Caco-2 (cell line): ENCODE measurements at regions of chr22 and their contacts with region 1.

Region 1: GRCh38 chr22:44063462-44064371 is 39.6 kb downstream of the PARVB start:
- DNase-seq: no peak
- H3K4me3 ChIP-seq: no peak overlapping the region
- H3K4me3 Mint-ChIP-seq: no peak overlapping the region
- H3K27ac Mint-ChIP-seq: no peak overlapping the region
- H3K4me1 ChIP-seq: peaks cover 5% of the 10 kb centered on the region; the same call in 1 of the 2 replicates
- H3K4me1 Mint-ChIP-seq: no peaks in the 10 kb centered on the region
- H3K27me3 ChIP-seq: no peaks in the 10 kb centered on the region; the same call in 1 of the 2 replicates
- H3K27me3 Mint-ChIP-seq: no peaks in the 10 kb centered on the region
- CTCF ChIP-seq: no peak

Region 2: GRCh38 chr22:44097263-44098082 is 33.8 kb after region 1 on chr22:
- CTCF ChIA-PET with region 1: no interaction called
- POLR2A ChIA-PET with region 1: no interaction called
- intact Hi-C with region 1: loop called (anchors 2 kb)
- DNase-seq: no peak
- H3K4me3 ChIP-seq: no peak overlapping the region
- H3K4me3 Mint-ChIP-seq: no peak overlapping the region
- H3K27ac Mint-ChIP-seq: no peak overlapping the region
- H3K4me1 ChIP-seq: no peaks in the 10 kb centered on the region
- H3K4me1 Mint-ChIP-seq: no peaks in the 10 kb centered on the region
- H3K27me3 ChIP-seq: no peaks in the 10 kb centered on the region
- H3K27me3 Mint-ChIP-seq: no peaks in the 10 kb centered on the region
- CTCF ChIP-seq: no peak

Region 3: GRCh38 chr22:44133901-44134571 is 70.3 kb after region 1 on chr22:
- CTCF ChIA-PET with region 1: no interaction called
- POLR2A ChIA-PET with region 1: no interaction called
- intact Hi-C with region 1: no loop called
- DNase-seq: no peak
- H3K4me3 ChIP-seq: no peak overlapping the region
- H3K4me3 Mint-ChIP-seq: no peak overlapping the region
- H3K27ac Mint-ChIP-seq: no peak overlapping the region
- H3K4me1 ChIP-seq: no peaks in the 10 kb centered on the region
- H3K4me1 Mint-ChIP-seq: no peaks in the 10 kb centered on the region
- H3K27me3 ChIP-seq: no peaks in the 10 kb centered on the region
- H3K27me3 Mint-ChIP-seq: no peaks in the 10 kb centered on the region
- CTCF ChIP-seq: no peak